Naive thymus-derived CD4-positive, alpha-beta T cell (primary cell): ENCODE measurements at regions of chr9 and their contacts with region 1.

Region 1: GRCh38 chr9:136267261-136268111 is 21.9 kb upstream of the QSOX2 start:
- DNase-seq: peak; percentile 70 to 85 (median 80)
- ATAC-seq: peak; percentile 99
- H3K4me3 ChIP-seq: peak overlapping the region; percentile 74
- H3K4me3 Mint-ChIP-seq: peak overlapping the region; percentile 70 to 84 (median 79)
- H3K27ac ChIP-seq: peak overlapping the region; percentile 62
- H3K27ac Mint-ChIP-seq: peak overlapping the region; percentile 57 to 89 (median 77)
- H3K4me1 ChIP-seq: peaks cover 4 to 7% of the 10 kb centered on the region in 2 donors
- H3K4me1 Mint-ChIP-seq: peaks cover 0 to 14% (median 3%) of the 10 kb centered on the region in 7 donors
- H3K27me3 ChIP-seq: no peaks in the 10 kb centered on the region
- H3K27me3 Mint-ChIP-seq: peaks cover 0 to 14% (median 0%) of the 10 kb centered on the region in 5 donors

Region 2: DNA sequence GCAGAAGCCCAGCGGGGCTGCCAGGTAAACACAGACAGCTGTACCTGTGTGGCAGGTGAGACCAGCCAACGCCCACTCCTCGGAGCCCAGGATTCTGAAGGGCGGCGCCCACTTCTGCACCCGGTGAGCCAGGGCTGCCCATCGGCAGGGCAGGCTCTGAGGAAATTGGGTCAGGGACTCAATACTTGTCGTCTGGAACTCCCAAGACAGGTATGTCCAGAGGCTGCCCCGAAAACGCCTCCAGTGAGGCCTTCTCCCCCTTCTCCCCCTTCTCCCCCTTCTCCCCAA is 647.9 kb before region 1 on chr9:
- CTCF ChIA-PET with region 1: no interaction called
- POLR2A ChIA-PET with region 1: no interaction called
- intact Hi-C with region 1: no loop called
- DNase-seq: no peak
- ATAC-seq: no peak
- H3K4me3 ChIP-seq: no peak overlapping the region
- H3K4me3 Mint-ChIP-seq: no peak overlapping the region
- H3K27ac ChIP-seq: no peak overlapping the region
- H3K27ac Mint-ChIP-seq: no peak overlapping the region
- H3K4me1 ChIP-seq: no peaks in the 10 kb centered on the region
- H3K4me1 Mint-ChIP-seq: no peaks in the 10 kb centered on the region
- H3K27me3 ChIP-seq: no peaks in the 10 kb centered on the region
- H3K27me3 Mint-ChIP-seq: peaks cover 0 to 14% (median 7%) of the 10 kb centered on the region in 5 donors

Region 3: DNA sequence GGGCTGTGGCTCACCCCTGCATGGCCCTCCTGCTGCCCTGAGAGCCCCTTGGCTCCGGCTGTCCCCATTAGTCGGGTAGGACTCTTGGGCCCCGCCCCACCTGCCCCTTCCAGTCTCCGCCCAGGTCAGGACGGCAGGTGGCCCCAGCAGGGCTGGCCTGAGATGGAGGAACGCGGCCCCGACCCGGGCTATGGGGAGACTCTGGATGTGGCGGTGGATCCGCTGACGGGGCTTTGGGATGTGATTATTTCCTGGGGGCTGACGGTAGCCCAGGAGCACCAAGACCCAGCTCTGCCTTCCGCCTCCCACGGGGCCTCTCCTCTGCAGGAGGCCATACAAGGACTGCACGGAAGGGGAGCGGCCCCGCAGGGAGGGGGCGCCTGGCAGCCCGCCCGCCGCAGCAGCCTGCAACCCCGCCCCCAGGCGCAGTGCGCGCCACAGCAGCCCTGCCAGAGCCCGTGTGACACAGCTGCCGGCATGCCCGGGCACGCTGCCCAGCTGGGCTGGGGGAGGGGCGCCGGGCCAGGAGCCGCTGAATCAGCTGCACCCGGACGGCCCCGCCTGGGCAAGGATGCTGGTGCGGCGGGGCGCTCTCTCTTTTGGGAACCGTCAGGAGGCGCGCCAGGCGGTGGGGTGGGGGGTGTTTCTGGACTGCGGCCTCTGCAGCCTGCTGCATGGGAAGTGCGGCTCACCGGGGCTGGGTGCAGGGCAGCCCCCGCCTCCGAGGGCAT is 158.0 kb before region 1 on chr9:
- CTCF ChIA-PET with region 1: no interaction called
- POLR2A ChIA-PET with region 1: no interaction called
- intact Hi-C with region 1: loop called in 1 of 2 experiments (anchors 5 kb)
- DNase-seq: peak; percentile 80 to 93 (median 89)
- ATAC-seq: peak; percentile 96
- H3K4me3 ChIP-seq: peak overlapping the region; percentile 69
- H3K4me3 Mint-ChIP-seq: peak overlapping the region; percentile 78 to 91 (median 88)
- H3K27ac ChIP-seq: peak overlapping the region; percentile 82
- H3K27ac Mint-ChIP-seq: peak overlapping the region; percentile 64 to 93 (median 91)
- H3K4me1 ChIP-seq: peaks cover 60 to 75% of the 10 kb centered on the region in 2 donors
- H3K4me1 Mint-ChIP-seq: peaks cover 42 to 82% (median 64%) of the 10 kb centered on the region in 7 donors
- H3K27me3 ChIP-seq: no peaks in the 10 kb centered on the region
- H3K27me3 Mint-ChIP-seq: no peaks in the 10 kb centered on the region

Region 4: DNA sequence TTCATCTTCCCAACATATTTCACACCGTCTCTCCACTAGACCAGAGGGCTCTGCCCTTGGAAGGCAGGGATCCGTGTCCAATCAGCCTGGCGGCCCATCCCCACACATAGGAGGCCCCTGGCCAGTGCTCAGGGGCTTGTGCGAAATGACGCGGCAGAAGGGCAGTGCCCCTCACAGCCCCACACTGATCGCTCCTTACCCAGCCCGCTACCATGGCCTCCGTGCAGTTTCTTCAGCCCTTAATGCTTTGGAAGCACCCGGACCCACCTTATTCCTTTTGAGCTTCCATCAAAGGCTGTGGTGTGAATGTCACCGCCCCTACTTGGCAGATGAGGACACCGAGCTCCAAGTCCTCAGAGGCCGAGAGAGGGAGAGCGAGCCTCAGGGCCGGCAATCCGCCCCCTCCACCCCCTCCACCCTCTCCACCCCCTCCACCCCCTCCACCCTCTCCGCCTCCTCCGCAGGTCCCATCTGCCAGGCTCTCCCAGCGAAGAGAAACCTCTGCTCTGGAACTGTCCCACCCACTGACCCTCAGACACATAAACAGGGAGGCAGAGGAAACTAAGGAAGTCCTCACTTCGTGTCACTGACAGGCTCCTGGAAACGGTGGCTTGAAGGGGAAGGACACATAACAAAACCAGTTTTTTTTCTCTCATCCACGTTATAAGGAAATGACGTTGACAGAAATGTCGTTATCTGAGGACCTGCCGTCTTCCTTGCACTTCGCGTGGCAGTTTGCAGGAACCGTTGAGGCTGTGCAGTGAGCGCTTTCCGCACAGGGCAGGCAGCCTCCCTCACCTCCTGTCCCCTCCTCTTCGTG is 35.8 kb before region 1 on chr9:
- CTCF ChIA-PET with region 1: interaction called, 3 read pairs
- POLR2A ChIA-PET with region 1: no interaction called
- intact Hi-C with region 1: loop called in 1 of 2 experiments (anchors 1 kb)
- DNase-seq: peak in 7 of 9 donors; percentile 30 to 64 (median 53)
- ATAC-seq: peak; percentile 82
- H3K4me3 ChIP-seq: no peak overlapping the region
- H3K4me3 Mint-ChIP-seq: peak overlapping the region; percentile 59 to 86 (median 78)
- H3K27ac ChIP-seq: peak overlapping the region; percentile 64
- H3K27ac Mint-ChIP-seq: peak overlapping the region; percentile 74 to 95 (median 86)
- H3K4me1 ChIP-seq: peaks cover 0 to 9% of the 10 kb centered on the region in 2 donors
- H3K4me1 Mint-ChIP-seq: peaks cover 30 to 59% (median 44%) of the 10 kb centered on the region in 7 donors
- H3K27me3 ChIP-seq: no peaks in the 10 kb centered on the region
- H3K27me3 Mint-ChIP-seq: no peaks in the 10 kb centered on the region

Region 5: GRCh38 chr9:136493567-136493971 is 226.1 kb after region 1 on chr9:
- CTCF ChIA-PET with region 1: no interaction called
- POLR2A ChIA-PET with region 1: no interaction called
- intact Hi-C with region 1: no loop called
- DNase-seq: no peak
- ATAC-seq: no peak
- H3K4me3 ChIP-seq: no peak overlapping the region
- H3K4me3 Mint-ChIP-seq: no peak overlapping the region
- H3K27ac ChIP-seq: no peak overlapping the region
- H3K27ac Mint-ChIP-seq: no peak overlapping the region
- H3K4me1 ChIP-seq: peaks cover 0 to under 1% of the 10 kb centered on the region in 2 donors
- H3K4me1 Mint-ChIP-seq: peaks cover 0 to 3% (median 0%) of the 10 kb centered on the region in 7 donors
- H3K27me3 ChIP-seq: no peaks in the 10 kb centered on the region
- H3K27me3 Mint-ChIP-seq: no peaks in the 10 kb centered on the region